ENCODE measurements at regions of chr4 and their contacts with region 1.

Region 1: DNA sequence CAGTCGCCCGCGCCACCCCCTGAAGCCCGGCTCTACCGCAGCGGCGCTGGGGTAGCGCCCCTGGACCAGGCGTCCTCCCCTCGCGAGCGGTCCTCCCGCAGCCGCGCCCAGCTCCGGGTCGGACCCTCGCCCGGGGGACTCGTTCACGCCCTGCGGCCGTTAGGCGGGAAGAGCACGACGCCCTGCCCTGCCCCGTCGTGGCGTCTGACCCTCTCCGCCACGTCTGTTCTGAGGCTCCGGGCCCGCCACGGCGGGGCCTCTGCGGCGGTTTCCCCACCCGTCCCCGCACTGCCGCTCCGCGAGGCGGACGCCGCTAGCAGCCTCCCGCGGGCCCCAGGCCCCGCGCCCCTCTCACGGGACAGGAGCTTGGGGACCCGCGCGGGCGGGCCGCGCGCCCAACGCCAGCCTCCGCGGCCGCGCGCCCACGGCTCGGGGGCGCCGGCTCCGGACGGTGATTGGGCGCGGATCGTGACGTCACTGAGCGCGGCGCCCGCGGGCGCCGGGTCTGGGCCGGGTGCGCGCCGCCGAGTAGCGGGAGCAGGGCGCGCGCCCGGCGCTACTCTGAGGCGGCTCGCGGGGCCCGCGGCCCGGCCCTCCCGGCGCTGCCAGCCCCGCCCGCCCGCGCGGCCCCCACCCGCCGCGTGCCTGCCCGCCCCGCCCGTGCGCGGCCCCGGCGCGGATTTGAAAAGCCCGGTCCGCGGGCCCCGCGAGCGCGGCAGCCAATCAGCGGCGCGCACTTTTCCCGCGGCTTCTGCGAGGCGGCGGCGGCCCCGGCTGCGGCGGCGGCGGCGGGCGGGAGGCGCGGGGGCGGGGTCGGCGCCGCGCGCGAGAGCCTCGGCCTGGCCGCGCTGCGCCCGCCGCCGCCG is at the start of gene NSD2:
- DNase-seq: peak; percentile 95
- ATAC-seq: peak; percentile 66
- H3K4me3 ChIP-seq: peak within 1 kb of the TSS; percentile 13 to 89 (median 79)
- H3K4me3 Mint-ChIP-seq: peak within 1 kb of the TSS; percentile 87
- H3K27ac ChIP-seq: peak within 1 kb of the TSS; percentile 87 to 95
- H3K27ac Mint-ChIP-seq: peak within 1 kb of the TSS; percentile 93
- H3K4me1 ChIP-seq: peaks cover 12 to 26% of the 10 kb centered on the region in 2 donors
- H3K4me1 Mint-ChIP-seq: peaks cover 26% of the 10 kb centered on the region
- H3K27me3 ChIP-seq: peaks cover 0 to 4% (median 2%) of the 10 kb centered on the region in 4 experiments
- H3K27me3 Mint-ChIP-seq: no peaks in the 10 kb centered on the region
- CTCF ChIP-seq: no peak
- total RNA-seq, gene NSD2: 64.8 and 71.9 TPM in 2 replicates

Region 2: GRCh38 chr4:1721004-1721665 is 149.7 kb before region 1 on chr4 and contains the starts of genes TACC3 and TMEM129:
- CTCF ChIA-PET with region 1: no interaction called
- POLR2A ChIA-PET with region 1: no interaction called
- intact Hi-C with region 1: loop called (anchors 5 kb)
- DNase-seq: peak; percentile 98
- ATAC-seq: peak; percentile 81
- H3K4me3 ChIP-seq: peak within 1 kb of the TSS; percentile 41 to 69 (median 60)
- H3K4me3 Mint-ChIP-seq: peak within 1 kb of the TSS; percentile 93
- H3K27ac ChIP-seq: peak within 1 kb of the TSS; percentile 89 to 96
- H3K27ac Mint-ChIP-seq: peak within 1 kb of the TSS; percentile 98
- H3K4me1 ChIP-seq: peaks cover 59 to 84% of the 10 kb centered on the region in 2 donors
- H3K4me1 Mint-ChIP-seq: peaks cover 65% of the 10 kb centered on the region
- H3K27me3 ChIP-seq: no peaks in the 10 kb centered on the region
- H3K27me3 Mint-ChIP-seq: no peaks in the 10 kb centered on the region
- CTCF ChIP-seq: no peak
- total RNA-seq, gene TACC3: 47.9 and 54.5 TPM in 2 replicates
- total RNA-seq, gene TMEM129: 41.0 and 41.9 TPM in 2 replicates

Region 3: GRCh38 chr4:1834047-1834775 is 36.6 kb before region 1 on chr4:
- CTCF ChIA-PET with region 1: no interaction called
- POLR2A ChIA-PET with region 1: no interaction called
- intact Hi-C with region 1: loop called (anchors 2 kb)
- DNase-seq: peak; percentile 76
- ATAC-seq: peak; percentile 84
- H3K4me3 ChIP-seq: no peak overlapping the region
- H3K4me3 Mint-ChIP-seq: peak overlapping the region; percentile 61
- H3K27ac ChIP-seq: peak overlapping the region; percentile 41 to 76
- H3K27ac Mint-ChIP-seq: peak overlapping the region; percentile 78
- H3K4me1 ChIP-seq: peaks cover 16 to 26% of the 10 kb centered on the region in 2 donors
- H3K4me1 Mint-ChIP-seq: peaks cover 29% of the 10 kb centered on the region
- H3K27me3 ChIP-seq: no peaks in the 10 kb centered on the region
- H3K27me3 Mint-ChIP-seq: no peaks in the 10 kb centered on the region
- CTCF ChIP-seq: no peak